Activated T-helper 1 cell treated with anti-CD3 and anti-CD28 coated beads, Interleukin-12 subunit alpha, Interleukin-12 subunit beta, Interleukin-2, Interleukin-4 antibody, amounts not matched to agents 30 ng/mL and 10 ng/mL and 1 ng/mL, durations not matched to agents 14 hours and 24 hours and 36 hours (primary cell): ENCODE measurements at regions of chr1 and their contacts with region 1.

Region 1: GRCh38 chr1:226736908-226737818 is 1.9 kb downstream of the ITPKB start:
- DNase-seq: peak; percentile 41
- H3K4me3 Mint-ChIP-seq: peak overlapping the region; percentile 90
- H3K27ac Mint-ChIP-seq: peak overlapping the region; percentile 86
- H3K4me1 Mint-ChIP-seq: peaks cover 50% of the 10 kb centered on the region
- H3K27me3 Mint-ChIP-seq: peaks cover 1% of the 10 kb centered on the region

Region 2: DNA sequence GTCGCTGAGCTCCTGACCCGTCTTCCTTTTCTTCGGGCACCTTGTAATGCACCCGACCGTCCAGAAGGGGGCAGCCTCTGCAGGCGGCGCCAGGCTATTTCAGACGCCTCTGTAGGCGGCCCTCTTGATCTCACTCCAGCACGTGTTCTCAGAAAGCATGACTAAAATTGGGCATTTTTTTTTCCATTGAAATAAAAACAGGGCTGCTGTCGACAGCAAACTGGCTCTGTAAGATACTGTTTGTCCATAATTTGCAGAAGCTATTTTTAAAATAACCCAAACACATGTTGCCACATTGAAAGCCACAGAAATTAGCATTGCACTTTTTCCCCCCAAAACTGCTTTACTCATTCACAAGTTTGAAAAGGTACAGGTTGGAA is 110.6 kb before region 1 on chr1:
- intact Hi-C with region 1: loop called (anchors 1 kb)
- DNase-seq: peak; percentile 72
- H3K4me3 Mint-ChIP-seq: peak overlapping the region; percentile 54
- H3K27ac Mint-ChIP-seq: peak overlapping the region; percentile 84
- H3K4me1 Mint-ChIP-seq: peaks cover 24% of the 10 kb centered on the region
- H3K27me3 Mint-ChIP-seq: peaks cover 13% of the 10 kb centered on the region

Region 3: GRCh38 chr1:226679853-226680516 is 57.2 kb before region 1 on chr1:
- intact Hi-C with region 1: loop called (anchors 1 kb)
- DNase-seq: peak; percentile 65
- H3K4me3 Mint-ChIP-seq: peak overlapping the region; percentile 82
- H3K27ac Mint-ChIP-seq: peak overlapping the region; percentile 97
- H3K4me1 Mint-ChIP-seq: peaks cover 97% of the 10 kb centered on the region
- H3K27me3 Mint-ChIP-seq: no peaks in the 10 kb centered on the region

Region 4: GRCh38 chr1:226708342-226708780 is 28.8 kb before region 1 on chr1:
- intact Hi-C with region 1: loop called (anchors 1 kb)
- DNase-seq: no peak
- H3K4me3 Mint-ChIP-seq: peak overlapping the region; percentile 59
- H3K27ac Mint-ChIP-seq: peak overlapping the region; percentile 94
- H3K4me1 Mint-ChIP-seq: peaks cover 72% of the 10 kb centered on the region
- H3K27me3 Mint-ChIP-seq: peaks cover 1% of the 10 kb centered on the region

Region 5: DNA sequence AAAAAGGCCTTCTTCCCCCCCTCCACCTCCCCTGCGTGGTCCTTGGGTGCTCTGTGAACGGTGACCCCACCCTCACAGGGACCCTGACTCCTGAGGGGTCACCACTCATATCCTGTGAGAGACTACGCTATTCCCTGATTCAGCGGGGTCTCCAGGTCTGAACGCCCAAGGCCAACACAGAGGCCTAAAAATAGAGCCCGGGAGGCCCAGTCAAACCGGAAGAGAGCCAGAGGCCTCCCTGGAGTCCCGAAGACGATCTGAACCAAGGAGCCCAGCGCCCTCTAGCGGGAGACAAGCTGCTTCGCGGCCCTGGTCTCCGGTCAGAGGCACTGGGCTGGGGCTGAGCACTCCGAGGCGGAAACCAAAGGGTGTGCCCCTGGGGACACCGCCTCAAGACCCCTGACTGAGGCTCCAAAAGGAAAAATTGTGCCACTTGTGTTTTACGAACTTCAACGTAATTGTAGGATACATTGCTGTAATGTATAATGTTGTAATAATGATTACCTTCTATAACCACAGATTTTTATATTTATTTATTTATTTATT is 90.9 kb after region 1 on chr1:
- intact Hi-C with region 1: loop called (anchors 1 kb)
- DNase-seq: peak; percentile 91
- H3K4me3 Mint-ChIP-seq: no peak overlapping the region
- H3K27ac Mint-ChIP-seq: peak overlapping the region; percentile 89
- H3K4me1 Mint-ChIP-seq: peaks cover 32% of the 10 kb centered on the region
- H3K27me3 Mint-ChIP-seq: peaks cover 5% of the 10 kb centered on the region